B cell (primary cell): ENCODE measurements at regions of chr10 and their contacts with region 1.

Region 1: GRCh38 chr10:92848441-92849233 is at the start of gene EXOC6:
- DNase-seq: peak; percentile 96
- ATAC-seq: peak; percentile 88
- H3K4me3 ChIP-seq: peak within 1 kb of the TSS; percentile 61 to 83 (median 65)
- H3K4me3 Mint-ChIP-seq: peak within 1 kb of the TSS; percentile 91
- H3K27ac ChIP-seq: peak within 1 kb of the TSS; percentile 84 to 85
- H3K27ac Mint-ChIP-seq: peak within 1 kb of the TSS; percentile 93
- H3K4me1 ChIP-seq: peaks cover 23 to 26% of the 10 kb centered on the region in 2 donors
- H3K4me1 Mint-ChIP-seq: peaks cover 34% of the 10 kb centered on the region
- H3K27me3 ChIP-seq: no peaks in the 10 kb centered on the region
- H3K27me3 Mint-ChIP-seq: no peaks in the 10 kb centered on the region
- CTCF ChIP-seq: peak; percentile 54
- total RNA-seq, gene EXOC6: 22.6 and 25.6 TPM in 2 replicates

Region 2: GRCh38 chr10:92290837-92291615 is 557.6 kb before region 1 on chr10 and contains the starts of genes CPEB3 and MARCHF5:
- CTCF ChIA-PET with region 1: no interaction called
- POLR2A ChIA-PET with region 1: no interaction called
- intact Hi-C with region 1: loop called (anchors 10 kb)
- DNase-seq: peak; percentile 96
- ATAC-seq: peak; percentile 97
- H3K4me3 ChIP-seq: peak within 1 kb of the TSS; percentile 57 to 99 (median 85)
- H3K4me3 Mint-ChIP-seq: peak within 1 kb of the TSS; percentile 95
- H3K27ac ChIP-seq: peak within 1 kb of the TSS; percentile 62 to 88
- H3K27ac Mint-ChIP-seq: peak within 1 kb of the TSS; percentile 91
- H3K4me1 ChIP-seq: peaks cover 9 to 20% of the 10 kb centered on the region in 2 donors
- H3K4me1 Mint-ChIP-seq: peaks cover 29% of the 10 kb centered on the region
- H3K27me3 ChIP-seq: no peaks in the 10 kb centered on the region
- H3K27me3 Mint-ChIP-seq: no peaks in the 10 kb centered on the region
- CTCF ChIP-seq: peak; percentile 68
- total RNA-seq, gene CPEB3: 5.0 and 6.7 TPM in 2 replicates
- total RNA-seq, gene MARCHF5: 25.9 and 27.8 TPM in 2 replicates

Region 3: DNA sequence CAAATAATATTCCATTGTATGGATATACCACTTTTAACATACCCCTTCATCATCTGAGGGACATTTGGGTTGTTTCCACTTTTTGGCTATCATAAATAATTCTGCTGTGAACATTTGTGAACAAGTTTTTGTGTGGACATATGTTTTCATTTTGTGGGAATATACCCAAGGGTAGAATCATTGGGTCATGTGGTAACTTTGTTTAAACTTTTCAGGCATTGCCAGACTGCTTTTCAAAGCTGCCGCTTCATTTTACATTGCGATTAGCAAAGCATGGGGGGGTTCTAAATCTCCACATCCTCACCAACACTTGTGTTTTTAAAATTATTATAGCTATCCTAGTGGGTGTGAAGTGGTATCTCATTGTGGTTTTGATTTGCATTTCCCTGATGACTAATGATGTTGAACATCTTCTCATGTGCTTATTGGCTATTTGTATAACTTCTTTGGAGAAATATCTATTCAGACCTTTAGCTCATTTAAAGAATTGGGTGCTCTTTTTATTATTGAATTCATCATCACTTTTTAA is 167.3 kb before region 1 on chr10:
- CTCF ChIA-PET with region 1: interaction called, 36 read pairs
- POLR2A ChIA-PET with region 1: no interaction called
- intact Hi-C with region 1: no loop called
- DNase-seq: no peak
- ATAC-seq: no peak
- H3K4me3 ChIP-seq: no peak overlapping the region
- H3K4me3 Mint-ChIP-seq: no peak overlapping the region
- H3K27ac ChIP-seq: no peak overlapping the region
- H3K27ac Mint-ChIP-seq: no peak overlapping the region
- H3K4me1 ChIP-seq: peaks cover 5 to 6% of the 10 kb centered on the region in 2 donors
- H3K4me1 Mint-ChIP-seq: peaks cover 18% of the 10 kb centered on the region
- H3K27me3 ChIP-seq: no peaks in the 10 kb centered on the region
- H3K27me3 Mint-ChIP-seq: no peaks in the 10 kb centered on the region
- CTCF ChIP-seq: no peak

Region 4: GRCh38 chr10:92773776-92774175 is 74.9 kb before region 1 on chr10:
- CTCF ChIA-PET with region 1: interaction called, 11 read pairs
- POLR2A ChIA-PET with region 1: no interaction called
- intact Hi-C with region 1: no loop called
- DNase-seq: no peak
- ATAC-seq: no peak
- H3K4me3 ChIP-seq: no peak overlapping the region
- H3K4me3 Mint-ChIP-seq: no peak overlapping the region
- H3K27ac ChIP-seq: no peak overlapping the region
- H3K27ac Mint-ChIP-seq: no peak overlapping the region
- H3K4me1 ChIP-seq: peaks cover 0 to 5% of the 10 kb centered on the region in 2 donors
- H3K4me1 Mint-ChIP-seq: peaks cover 6% of the 10 kb centered on the region
- H3K27me3 ChIP-seq: no peaks in the 10 kb centered on the region
- H3K27me3 Mint-ChIP-seq: no peaks in the 10 kb centered on the region
- CTCF ChIP-seq: no peak

Region 5: DNA sequence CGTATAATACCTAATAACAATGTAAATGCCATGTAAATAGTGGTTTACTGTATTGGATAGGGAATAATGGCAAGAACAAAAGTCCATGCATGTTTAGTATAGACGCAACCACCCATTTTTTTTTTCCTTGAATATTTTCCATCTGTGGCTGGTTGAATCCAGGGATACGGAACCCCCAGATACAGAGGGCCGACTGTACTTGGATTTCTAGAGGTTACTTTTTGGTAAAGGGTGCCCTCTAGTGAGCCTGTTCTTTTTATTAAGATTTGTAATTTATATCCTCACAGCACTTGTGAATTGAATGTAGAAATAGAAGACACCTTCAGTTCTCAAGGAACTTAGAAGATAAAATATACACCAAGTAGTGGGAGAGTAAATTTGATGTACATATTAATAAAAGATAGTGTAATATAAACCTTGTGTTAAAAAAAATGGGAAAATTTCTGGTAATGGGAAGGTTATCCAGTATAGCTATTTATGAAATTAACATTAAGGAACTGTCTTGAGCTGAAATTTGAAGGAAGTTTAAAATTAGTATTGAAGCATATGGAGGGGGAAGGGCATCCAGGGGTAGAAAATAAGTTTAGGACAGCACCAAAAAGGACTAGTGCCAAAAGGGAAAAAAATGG is 31.7 kb after region 1 on chr10:
- CTCF ChIA-PET with region 1: interaction called, 22 read pairs
- POLR2A ChIA-PET with region 1: no interaction called
- intact Hi-C with region 1: loop called (anchors 1 kb)
- DNase-seq: peak; percentile 70
- ATAC-seq: peak; percentile 39
- H3K4me3 ChIP-seq: no peak overlapping the region
- H3K4me3 Mint-ChIP-seq: no peak overlapping the region
- H3K27ac ChIP-seq: no peak overlapping the region
- H3K27ac Mint-ChIP-seq: no peak overlapping the region
- H3K4me1 ChIP-seq: peaks cover 0 to 12% of the 10 kb centered on the region in 2 donors
- H3K4me1 Mint-ChIP-seq: peaks cover 29% of the 10 kb centered on the region
- H3K27me3 ChIP-seq: no peaks in the 10 kb centered on the region
- H3K27me3 Mint-ChIP-seq: no peaks in the 10 kb centered on the region
- CTCF ChIP-seq: peak; percentile 78

Region 6: DNA sequence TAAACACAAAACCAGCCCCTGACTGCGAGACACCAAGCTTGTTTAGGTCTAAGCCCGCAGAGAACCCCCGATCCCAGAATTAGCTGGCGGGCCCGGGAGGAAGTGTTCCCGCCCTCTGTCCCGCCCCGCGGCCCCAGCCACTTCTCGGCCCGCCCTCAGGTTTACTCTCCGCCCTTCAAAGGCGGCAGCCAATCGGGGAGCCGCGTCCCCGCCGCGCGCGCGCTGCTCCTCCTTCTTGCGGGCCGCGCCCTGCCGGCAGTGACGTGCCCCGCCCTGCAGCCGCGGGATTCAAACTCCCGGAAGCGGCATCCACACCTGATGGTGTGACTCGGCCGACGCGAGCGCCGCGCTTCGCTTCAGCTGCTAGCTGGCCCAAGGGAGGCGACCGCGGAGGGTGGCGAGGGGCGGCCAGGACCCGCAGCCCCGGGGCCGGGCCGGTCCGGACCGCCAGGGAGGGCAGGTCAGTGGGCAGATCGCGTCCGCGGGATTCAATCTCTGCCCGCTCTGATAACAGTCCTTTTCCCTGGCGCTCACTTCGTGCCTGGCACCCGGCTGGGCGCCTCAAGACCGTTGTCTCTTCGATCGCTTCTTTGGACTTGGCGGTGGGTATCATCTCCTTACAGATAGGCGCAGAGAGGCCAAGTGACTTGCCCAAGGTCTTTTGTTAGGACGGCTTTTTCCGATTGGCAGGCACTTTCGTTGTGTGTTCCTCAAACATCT is 647.8 kb after region 1 on chr10 and contains the start of gene CEP55:
- CTCF ChIA-PET with region 1: no interaction called
- POLR2A ChIA-PET with region 1: no interaction called
- intact Hi-C with region 1: loop called (anchors 2 kb)
- DNase-seq: peak; percentile 94
- ATAC-seq: peak; percentile 99
- H3K4me3 ChIP-seq: peak within 1 kb of the TSS; percentile 67 to 97 (median 81)
- H3K4me3 Mint-ChIP-seq: peak within 1 kb of the TSS; percentile 93
- H3K27ac ChIP-seq: peak within 1 kb of the TSS in 1 of 2 donors; percentile 44
- H3K27ac Mint-ChIP-seq: peak within 1 kb of the TSS; percentile 67
- H3K4me1 ChIP-seq: peaks cover 8 to 16% of the 10 kb centered on the region in 2 donors
- H3K4me1 Mint-ChIP-seq: peaks cover 15% of the 10 kb centered on the region
- H3K27me3 ChIP-seq: peaks cover 0 to 4% (median 1%) of the 10 kb centered on the region in 4 experiments
- H3K27me3 Mint-ChIP-seq: peaks cover 8% of the 10 kb centered on the region
- CTCF ChIP-seq: no peak
- total RNA-seq, gene CEP55: 0.19 and 0.27 TPM in 2 replicates